ENCODE measurements at regions of chr3 and their contacts with region 1.

Region 1: DNA sequence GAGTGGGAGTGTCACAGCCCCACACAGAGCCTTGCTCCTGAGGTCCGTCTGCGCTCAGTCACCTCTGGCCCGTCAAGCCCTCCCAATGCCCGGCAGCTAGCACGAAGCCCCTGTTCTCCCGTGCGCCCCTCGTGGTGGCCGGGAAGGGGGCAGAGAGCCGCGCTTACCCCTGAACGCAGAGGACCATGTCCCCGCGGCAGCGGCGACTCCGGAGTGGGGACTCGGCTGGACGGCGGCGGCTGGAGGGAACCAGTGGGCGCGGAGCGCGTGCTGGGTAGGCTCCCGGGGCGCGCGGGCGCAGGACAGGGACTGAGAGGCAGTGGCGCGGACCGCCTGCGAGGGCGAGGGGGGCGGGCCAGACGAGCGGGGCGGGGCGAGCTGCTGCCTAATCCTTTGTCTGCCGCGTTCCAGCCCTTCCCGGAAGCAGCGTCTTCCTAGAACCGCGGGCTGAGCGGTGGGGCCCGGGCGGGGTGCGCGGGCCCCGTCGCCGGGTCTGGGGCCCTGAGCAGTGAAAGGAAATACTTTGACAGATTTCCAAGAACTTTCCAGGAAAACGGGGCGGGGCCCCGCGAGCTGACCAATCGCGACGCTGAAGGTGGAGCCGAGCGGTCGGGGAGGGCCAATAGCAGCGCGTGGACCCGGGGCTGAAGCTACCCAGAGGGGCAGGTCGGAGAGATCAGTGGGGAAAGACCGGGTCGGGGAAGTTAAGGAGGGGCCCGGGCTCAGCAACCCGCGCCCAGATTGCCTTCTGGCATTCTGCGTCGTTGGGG is at the start of gene CISH:
- DNase-seq: peak; percentile 83 to 97 (median 90)
- ATAC-seq: peak; percentile 68
- H3K4me3 ChIP-seq: peak within 1 kb of the TSS; percentile 87
- H3K4me3 Mint-ChIP-seq: peak within 1 kb of the TSS; percentile 96
- H3K27ac ChIP-seq: peak within 1 kb of the TSS; percentile 79 to 89
- H3K27ac Mint-ChIP-seq: peak within 1 kb of the TSS; percentile 93
- H3K4me1 ChIP-seq: peaks cover 88% of the 10 kb centered on the region
- H3K4me1 Mint-ChIP-seq: peaks cover 77% of the 10 kb centered on the region
- H3K27me3 ChIP-seq: no peaks in the 10 kb centered on the region
- H3K27me3 Mint-ChIP-seq: no peaks in the 10 kb centered on the region
- CTCF ChIP-seq: peak; percentile 34
- total RNA-seq, gene CISH: 3.5 to 3.7 TPM

Region 2: GRCh38 chr3:50350527-50351322 is 260.9 kb before region 1 on chr3 and contains the starts of genes CYB561D2 and NPRL2:
- CTCF ChIA-PET with region 1: interaction called, 4 read pairs
- POLR2A ChIA-PET with region 1: interaction called, 4 read pairs
- intact Hi-C with region 1: loop called (anchors 5 kb)
- DNase-seq: peak; percentile 98 to 100 (median 99)
- ATAC-seq: peak; percentile 85
- H3K4me3 ChIP-seq: peak within 1 kb of the TSS; percentile 76
- H3K4me3 Mint-ChIP-seq: peak within 1 kb of the TSS; percentile 97
- H3K27ac ChIP-seq: peak within 1 kb of the TSS; percentile 94 to 97
- H3K27ac Mint-ChIP-seq: peak within 1 kb of the TSS; percentile 99
- H3K4me1 ChIP-seq: peaks cover 73% of the 10 kb centered on the region
- H3K4me1 Mint-ChIP-seq: peaks cover 64% of the 10 kb centered on the region
- H3K27me3 ChIP-seq: no peaks in the 10 kb centered on the region
- H3K27me3 Mint-ChIP-seq: no peaks in the 10 kb centered on the region
- CTCF ChIP-seq: no peak
- total RNA-seq, gene CYB561D2: 19.8 TPM
- total RNA-seq, gene NPRL2: 29.4 to 33.2 TPM

Region 3: GRCh38 chr3:50381383-50381782 is 230.3 kb before region 1 on chr3:
- CTCF ChIA-PET with region 1: no interaction called
- POLR2A ChIA-PET with region 1: no interaction called
- intact Hi-C with region 1: no loop called
- DNase-seq: no peak
- ATAC-seq: no peak
- H3K4me3 ChIP-seq: no peak overlapping the region
- H3K4me3 Mint-ChIP-seq: no peak overlapping the region
- H3K27ac ChIP-seq: no peak overlapping the region
- H3K27ac Mint-ChIP-seq: no peak overlapping the region
- H3K4me1 ChIP-seq: no peaks in the 10 kb centered on the region
- H3K4me1 Mint-ChIP-seq: no peaks in the 10 kb centered on the region
- H3K27me3 ChIP-seq: no peaks in the 10 kb centered on the region
- H3K27me3 Mint-ChIP-seq: no peaks in the 10 kb centered on the region
- CTCF ChIP-seq: no peak

Region 4: GRCh38 chr3:50568947-50569749 is 42.5 kb before region 1 on chr3 and contains the start of gene HEMK1:
- CTCF ChIA-PET with region 1: interaction called, 234 read pairs
- POLR2A ChIA-PET with region 1: interaction called, 446 read pairs
- intact Hi-C with region 1: loop called (anchors 1 kb)
- DNase-seq: peak; percentile 84 to 97 (median 91)
- ATAC-seq: peak; percentile 64
- H3K4me3 ChIP-seq: peak within 1 kb of the TSS; percentile 77
- H3K4me3 Mint-ChIP-seq: peak within 1 kb of the TSS; percentile 97
- H3K27ac ChIP-seq: peak within 1 kb of the TSS; percentile 80 to 83
- H3K27ac Mint-ChIP-seq: peak within 1 kb of the TSS; percentile 89
- H3K4me1 ChIP-seq: peaks cover 79% of the 10 kb centered on the region
- H3K4me1 Mint-ChIP-seq: peaks cover 78% of the 10 kb centered on the region
- H3K27me3 ChIP-seq: no peaks in the 10 kb centered on the region
- H3K27me3 Mint-ChIP-seq: no peaks in the 10 kb centered on the region
- CTCF ChIP-seq: no peak
- total RNA-seq, gene HEMK1: 12.4 to 14.6 TPM

Region 5: GRCh38 chr3:50652709-50653108 is 41.1 kb after region 1 on chr3:
- CTCF ChIA-PET with region 1: interaction called, 60 read pairs
- POLR2A ChIA-PET with region 1: interaction called, 43 read pairs
- intact Hi-C with region 1: loop called (anchors 1 kb)
- DNase-seq: peak; percentile 20 to 74 (median 50)
- ATAC-seq: peak; percentile 64
- H3K4me3 ChIP-seq: no peak overlapping the region
- H3K4me3 Mint-ChIP-seq: no peak overlapping the region
- H3K27ac ChIP-seq: no peak overlapping the region
- H3K27ac Mint-ChIP-seq: peak overlapping the region; percentile 2
- H3K4me1 ChIP-seq: peaks cover 6% of the 10 kb centered on the region
- H3K4me1 Mint-ChIP-seq: peaks cover 7% of the 10 kb centered on the region
- H3K27me3 ChIP-seq: no peaks in the 10 kb centered on the region
- H3K27me3 Mint-ChIP-seq: no peaks in the 10 kb centered on the region
- CTCF ChIP-seq: peak; percentile 69

Region 6: DNA sequence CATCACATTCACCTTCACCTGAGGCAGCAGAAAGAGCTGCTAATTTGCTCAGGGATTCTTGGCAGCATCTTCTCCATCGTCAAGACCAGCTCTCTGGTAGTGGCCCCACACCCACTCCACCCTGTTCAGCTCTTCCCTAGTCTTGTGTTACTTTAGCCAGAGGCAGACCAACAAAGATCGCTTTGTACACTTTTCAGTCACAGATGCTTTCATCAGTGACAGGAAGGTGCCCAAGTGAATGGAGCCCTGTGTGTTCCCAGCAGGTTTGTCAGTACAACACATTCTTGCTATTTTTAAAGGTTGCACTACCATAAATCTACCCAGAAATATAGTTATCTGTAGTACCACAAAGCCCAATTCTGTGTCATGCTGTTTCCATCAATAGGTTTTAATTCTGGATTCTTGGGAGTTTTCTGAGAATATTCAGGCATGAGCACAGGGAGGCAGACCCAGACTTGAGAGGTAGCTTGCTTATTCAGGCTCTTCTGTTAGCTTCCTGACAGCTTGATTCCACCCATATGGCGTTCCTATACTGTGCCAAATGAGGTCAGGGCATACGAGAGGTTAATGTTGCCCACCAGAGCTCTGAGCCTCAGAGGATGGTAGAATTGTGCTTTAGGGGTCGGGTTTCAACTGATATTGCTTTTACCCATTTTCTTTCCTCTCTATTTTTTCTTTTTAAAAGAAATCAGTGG is 663.6 kb after region 1 on chr3:
- CTCF ChIA-PET with region 1: no interaction called
- POLR2A ChIA-PET with region 1: interaction called, 4 read pairs
- intact Hi-C with region 1: loop called in 1 of 2 experiments (anchors 5 kb)
- DNase-seq: no peak
- ATAC-seq: no peak
- H3K4me3 ChIP-seq: no peak overlapping the region
- H3K4me3 Mint-ChIP-seq: no peak overlapping the region
- H3K27ac ChIP-seq: no peak overlapping the region
- H3K27ac Mint-ChIP-seq: peak overlapping the region; percentile 78
- H3K4me1 ChIP-seq: peaks cover 18% of the 10 kb centered on the region
- H3K4me1 Mint-ChIP-seq: peaks cover 45% of the 10 kb centered on the region
- H3K27me3 ChIP-seq: no peaks in the 10 kb centered on the region
- H3K27me3 Mint-ChIP-seq: no peaks in the 10 kb centered on the region
- CTCF ChIP-seq: no peak

Region 7: GRCh38 chr3:51391075-51391567 is 779.5 kb after region 1 on chr3 and contains the start of gene RBM15B:
- CTCF ChIA-PET with region 1: interaction called, 19 read pairs
- POLR2A ChIA-PET with region 1: interaction called, 7 read pairs
- intact Hi-C with region 1: loop called in 1 of 2 experiments (anchors 5 kb)
- DNase-seq: peak; percentile 94 to 98 (median 97)
- ATAC-seq: peak; percentile 86
- H3K4me3 ChIP-seq: peak within 1 kb of the TSS; percentile 63
- H3K4me3 Mint-ChIP-seq: peak within 1 kb of the TSS; percentile 86
- H3K27ac ChIP-seq: peak within 1 kb of the TSS; percentile 70 to 88
- H3K27ac Mint-ChIP-seq: peak within 1 kb of the TSS; percentile 91
- H3K4me1 ChIP-seq: peaks cover 90% of the 10 kb centered on the region
- H3K4me1 Mint-ChIP-seq: peaks cover 69% of the 10 kb centered on the region
- H3K27me3 ChIP-seq: no peaks in the 10 kb centered on the region
- H3K27me3 Mint-ChIP-seq: no peaks in the 10 kb centered on the region
- CTCF ChIP-seq: peak; percentile 10
- total RNA-seq, gene RBM15B: 29.1 to 29.2 TPM

Region 8: DNA sequence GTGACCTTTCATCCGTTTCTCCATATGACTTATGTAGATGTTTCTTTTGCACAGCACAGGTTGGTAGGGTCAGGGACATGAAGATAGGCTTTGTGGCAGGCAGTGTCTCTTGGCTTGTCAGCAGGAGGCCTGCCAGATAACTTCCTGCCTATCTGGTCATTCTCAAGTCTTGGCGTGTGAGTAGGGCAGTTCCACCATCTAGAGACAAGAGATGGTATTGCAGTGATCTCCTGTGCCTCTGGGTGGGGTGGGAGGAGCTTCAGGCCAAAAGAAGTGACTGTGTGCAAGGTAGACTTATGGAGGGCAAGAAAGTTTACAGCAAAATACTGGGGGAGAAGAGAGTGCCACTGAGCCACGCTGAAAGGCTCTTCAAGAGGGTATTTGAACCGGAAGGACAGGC is 1070.4 kb after region 1 on chr3:
- CTCF ChIA-PET with region 1: no interaction called
- POLR2A ChIA-PET with region 1: no interaction called
- intact Hi-C with region 1: loop called in 1 of 2 experiments (anchors 2 kb)
- DNase-seq: peak; percentile 59 to 93 (median 64)
- ATAC-seq: peak; percentile 80
- H3K4me3 ChIP-seq: peak overlapping the region; percentile 14
- H3K4me3 Mint-ChIP-seq: peak overlapping the region; percentile 47
- H3K27ac ChIP-seq: peak overlapping the region in 1 of 2 donors; percentile 32
- H3K27ac Mint-ChIP-seq: peak overlapping the region; percentile 51
- H3K4me1 ChIP-seq: peaks cover 100% of the 10 kb centered on the region
- H3K4me1 Mint-ChIP-seq: peaks cover 84% of the 10 kb centered on the region
- H3K27me3 ChIP-seq: no peaks in the 10 kb centered on the region
- H3K27me3 Mint-ChIP-seq: no peaks in the 10 kb centered on the region
- CTCF ChIP-seq: peak; percentile 90

Measured in CD4-positive, alpha-beta T cell (primary cell).